ENCODE measurements at regions of chr6 and their contacts with region 1.

Region 1: GRCh38 chr6:20126789-20127653 is 85.2 kb downstream of the MBOAT1 start:
- DNase-seq: peak; percentile 52 to 75
- ATAC-seq: peak; percentile 71 to 86 (median 80)
- H3K4me3 ChIP-seq: no peak overlapping the region
- H3K4me3 Mint-ChIP-seq: no peak overlapping the region
- H3K27ac ChIP-seq: no peak overlapping the region
- H3K27ac Mint-ChIP-seq: no peak overlapping the region
- H3K4me1 ChIP-seq: no peaks in the 10 kb centered on the region
- H3K4me1 Mint-ChIP-seq: peaks cover 0 to 7% of the 10 kb centered on the region in 2 donors
- H3K27me3 ChIP-seq: no peaks in the 10 kb centered on the region
- H3K27me3 Mint-ChIP-seq: peaks cover 0 to 3% of the 10 kb centered on the region in 2 donors
- CTCF ChIP-seq: peak; percentile 96

Region 2: DNA sequence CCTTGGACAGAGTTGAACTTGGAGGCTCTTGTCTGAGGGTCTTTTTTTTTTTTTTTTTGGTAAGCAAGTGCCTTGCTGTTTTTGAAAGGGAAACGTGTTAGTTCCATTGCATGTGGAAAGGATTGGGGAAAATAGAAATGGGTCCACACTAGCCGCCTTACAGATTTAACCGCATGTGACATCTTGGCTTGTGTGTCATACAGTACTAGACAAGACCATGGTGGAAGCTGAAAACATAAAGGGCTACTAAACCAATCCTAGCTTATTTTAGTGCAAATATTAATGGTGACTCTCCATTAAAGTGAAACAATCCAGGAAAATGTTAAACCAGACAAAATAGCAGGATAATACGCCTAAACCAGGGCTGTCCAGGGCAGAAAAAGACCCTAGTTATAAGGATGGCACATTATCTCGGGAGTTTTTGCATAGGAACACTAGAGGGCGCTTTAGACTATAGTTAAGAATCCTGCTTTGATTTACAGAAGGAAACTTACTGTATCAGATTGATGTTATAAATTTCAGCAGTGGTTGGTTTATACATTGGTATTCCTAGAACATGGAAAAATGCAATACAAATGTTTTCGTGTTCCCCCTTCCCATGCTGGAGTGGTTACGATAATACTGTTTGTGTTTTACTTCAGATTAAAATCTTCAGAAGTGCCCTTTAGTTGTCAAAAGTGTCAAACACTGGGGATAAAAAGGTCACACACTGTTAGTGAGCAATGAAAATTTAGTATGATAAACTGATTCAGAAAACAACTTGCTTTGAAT is 1802.9 kb before region 1 on chr6:
- intact Hi-C with region 1: loop called (anchors 2 kb)
- DNase-seq: peak in 1 of 2 donors; percentile 66
- ATAC-seq: peak in 2 of 3 donors; percentile 68 to 76
- H3K4me3 ChIP-seq: no peak overlapping the region
- H3K4me3 Mint-ChIP-seq: no peak overlapping the region
- H3K27ac ChIP-seq: no peak overlapping the region
- H3K27ac Mint-ChIP-seq: no peak overlapping the region
- H3K4me1 ChIP-seq: no peaks in the 10 kb centered on the region
- H3K4me1 Mint-ChIP-seq: no peaks in the 10 kb centered on the region
- H3K27me3 ChIP-seq: no peaks in the 10 kb centered on the region
- H3K27me3 Mint-ChIP-seq: peaks cover 0 to 8% of the 10 kb centered on the region in 2 donors
- CTCF ChIP-seq: peak; percentile 90

Region 3: DNA sequence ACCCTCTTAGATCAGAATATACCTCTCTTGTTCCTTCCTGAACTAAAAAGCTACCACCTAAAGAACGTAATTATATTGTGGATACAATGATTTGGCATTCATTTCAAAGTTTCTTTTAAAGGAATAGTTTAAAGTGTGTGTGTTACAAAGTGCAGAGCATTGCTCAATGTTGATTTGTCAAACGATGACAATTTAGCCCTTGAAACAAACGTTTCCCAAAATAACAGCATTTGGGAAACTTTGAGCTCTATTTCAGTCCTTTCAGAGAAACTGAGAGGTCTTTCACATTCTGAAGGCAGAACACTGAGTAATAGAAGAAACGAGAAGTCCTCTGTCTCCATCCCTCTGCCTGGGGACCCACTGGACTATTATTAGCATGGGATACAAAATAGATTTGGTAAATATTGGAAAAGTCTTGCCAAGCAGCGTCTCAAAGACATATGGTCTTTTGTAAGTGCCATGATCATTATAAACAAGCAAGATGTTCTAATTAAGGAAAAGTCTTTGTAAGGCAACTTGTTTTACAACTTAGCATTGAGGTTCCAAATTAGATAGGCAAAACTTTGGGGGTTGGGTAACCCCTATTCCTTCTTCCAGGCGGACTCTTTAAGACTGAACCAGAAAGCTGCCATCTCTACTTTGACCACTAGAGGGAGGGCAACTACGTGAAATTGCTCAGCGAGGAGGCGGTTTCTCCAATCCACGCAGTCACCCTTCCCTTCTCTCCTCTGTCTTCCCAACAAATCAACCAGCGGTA is 1531.1 kb before region 1 on chr6:
- intact Hi-C with region 1: loop called (anchors 2 kb)
- DNase-seq: peak in 1 of 2 donors; percentile 63
- ATAC-seq: peak in 2 of 3 donors; percentile 71 to 77
- H3K4me3 ChIP-seq: no peak overlapping the region
- H3K4me3 Mint-ChIP-seq: no peak overlapping the region
- H3K27ac ChIP-seq: no peak overlapping the region
- H3K27ac Mint-ChIP-seq: no peak overlapping the region
- H3K4me1 ChIP-seq: no peaks in the 10 kb centered on the region
- H3K4me1 Mint-ChIP-seq: peaks cover 5 to 7% of the 10 kb centered on the region in 2 donors
- H3K27me3 ChIP-seq: no peaks in the 10 kb centered on the region
- H3K27me3 Mint-ChIP-seq: peaks cover 0 to 15% of the 10 kb centered on the region in 2 donors
- CTCF ChIP-seq: peak; percentile 85

Region 4: DNA sequence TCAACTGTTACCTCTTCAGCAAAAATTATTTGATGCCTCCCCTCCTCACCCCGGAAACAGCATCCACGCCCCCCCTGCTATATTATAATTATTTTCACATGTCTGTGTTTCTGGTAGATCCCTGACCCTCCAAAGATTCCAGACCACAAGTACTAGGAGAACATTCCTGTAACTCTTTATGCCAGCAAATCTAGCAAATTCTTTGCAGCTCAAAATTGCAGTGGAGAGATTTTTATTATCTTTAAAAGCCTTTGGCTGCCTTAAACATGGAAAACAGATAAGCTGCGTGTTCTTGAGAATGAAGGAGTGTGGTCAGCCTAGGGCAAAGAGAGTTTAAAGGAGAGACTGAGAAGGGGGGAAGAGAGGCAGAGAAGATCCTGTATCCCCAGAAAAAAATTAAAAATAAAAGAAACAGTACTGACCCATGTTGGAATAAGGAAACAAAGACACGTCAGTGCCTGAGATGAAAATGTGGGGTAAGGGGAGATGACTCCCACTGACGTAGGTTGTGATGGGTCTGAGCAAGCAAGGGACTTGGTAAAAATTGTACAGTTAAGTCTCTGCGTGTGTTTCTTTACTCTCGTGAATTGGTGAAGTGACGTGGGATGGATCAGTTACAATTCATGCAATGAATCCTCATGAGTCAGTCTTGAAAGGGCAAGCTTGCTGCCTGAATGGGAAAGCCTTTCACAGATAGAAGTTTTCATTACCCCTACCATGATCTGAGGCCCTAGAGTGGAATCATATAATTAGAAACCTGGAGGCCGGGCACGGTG is 281.6 kb before region 1 on chr6:
- intact Hi-C with region 1: no loop called
- DNase-seq: no peak
- ATAC-seq: no peak
- H3K4me3 ChIP-seq: no peak overlapping the region
- H3K4me3 Mint-ChIP-seq: no peak overlapping the region
- H3K27ac ChIP-seq: no peak overlapping the region
- H3K27ac Mint-ChIP-seq: no peak overlapping the region
- H3K4me1 ChIP-seq: no peaks in the 10 kb centered on the region
- H3K4me1 Mint-ChIP-seq: no peaks in the 10 kb centered on the region
- H3K27me3 ChIP-seq: peaks cover 26% of the 10 kb centered on the region
- H3K27me3 Mint-ChIP-seq: peaks cover 16 to 36% of the 10 kb centered on the region in 2 donors
- CTCF ChIP-seq: no peak

Region 5: DNA sequence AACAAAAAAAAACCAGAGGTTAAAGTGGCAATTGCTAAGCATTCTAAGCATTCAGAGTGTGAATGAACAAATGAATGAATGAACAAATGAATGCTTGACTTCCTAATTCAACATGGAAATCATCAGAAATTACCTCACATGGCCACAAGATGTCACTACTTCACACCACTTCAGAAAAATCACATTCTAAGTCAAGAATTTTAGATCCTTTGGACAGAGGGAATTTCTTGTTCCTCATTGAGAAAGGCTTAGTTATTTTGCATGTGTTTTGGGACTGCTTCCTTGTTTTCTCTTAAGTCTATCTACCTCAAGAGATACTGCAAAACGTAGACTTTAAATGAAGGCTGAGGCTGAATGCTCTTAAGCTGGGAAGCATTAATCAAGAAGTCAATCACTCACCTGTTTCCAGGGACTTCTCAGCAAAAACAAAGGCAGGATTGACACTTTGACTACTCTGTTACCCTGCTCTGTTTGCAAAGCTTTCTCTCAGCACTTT is 34.9 kb before region 1 on chr6:
- intact Hi-C with region 1: loop called (anchors 2 kb)
- DNase-seq: peak in 1 of 2 donors; percentile 57
- ATAC-seq: peak in 2 of 3 donors; percentile 47 to 49
- H3K4me3 ChIP-seq: no peak overlapping the region
- H3K4me3 Mint-ChIP-seq: no peak overlapping the region
- H3K27ac ChIP-seq: no peak overlapping the region
- H3K27ac Mint-ChIP-seq: no peak overlapping the region
- H3K4me1 ChIP-seq: no peaks in the 10 kb centered on the region
- H3K4me1 Mint-ChIP-seq: no peaks in the 10 kb centered on the region
- H3K27me3 ChIP-seq: no peaks in the 10 kb centered on the region
- H3K27me3 Mint-ChIP-seq: peaks cover 0 to 8% of the 10 kb centered on the region in 2 donors
- CTCF ChIP-seq: peak; percentile 71

Region 6: DNA sequence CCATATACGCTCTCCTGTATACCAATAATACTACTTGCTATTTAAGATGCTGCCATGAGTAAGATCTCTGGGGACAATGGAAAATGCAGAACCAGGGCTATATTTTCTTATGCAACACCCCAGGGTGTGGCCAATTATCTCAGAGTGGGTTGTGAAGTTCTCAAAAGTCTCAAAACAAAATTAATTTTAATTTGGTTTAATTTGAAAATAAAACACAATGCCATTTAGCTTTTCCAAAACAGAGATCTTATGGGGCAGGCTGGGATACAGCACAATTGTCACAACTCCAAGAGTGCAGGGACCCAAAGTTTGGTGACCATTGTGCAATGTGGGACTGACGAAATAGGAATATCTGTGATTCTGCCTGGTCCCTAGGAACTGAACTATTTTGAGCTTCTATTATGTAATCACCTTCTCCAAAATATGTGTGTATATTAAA is 42.1 kb after region 1 on chr6:
- intact Hi-C with region 1: no loop called
- DNase-seq: no peak
- ATAC-seq: no peak
- H3K4me3 ChIP-seq: no peak overlapping the region
- H3K4me3 Mint-ChIP-seq: no peak overlapping the region
- H3K27ac ChIP-seq: peak overlapping the region; percentile 5
- H3K27ac Mint-ChIP-seq: no peak overlapping the region
- H3K4me1 ChIP-seq: peaks cover 5% of the 10 kb centered on the region
- H3K4me1 Mint-ChIP-seq: peaks cover 9 to 15% of the 10 kb centered on the region in 2 donors
- H3K27me3 ChIP-seq: no peaks in the 10 kb centered on the region
- H3K27me3 Mint-ChIP-seq: peaks cover 0 to 9% of the 10 kb centered on the region in 2 donors
- CTCF ChIP-seq: no peak